ENCODE measurements at regions of chr3 and their contacts with region 1.

Region 1: DNA sequence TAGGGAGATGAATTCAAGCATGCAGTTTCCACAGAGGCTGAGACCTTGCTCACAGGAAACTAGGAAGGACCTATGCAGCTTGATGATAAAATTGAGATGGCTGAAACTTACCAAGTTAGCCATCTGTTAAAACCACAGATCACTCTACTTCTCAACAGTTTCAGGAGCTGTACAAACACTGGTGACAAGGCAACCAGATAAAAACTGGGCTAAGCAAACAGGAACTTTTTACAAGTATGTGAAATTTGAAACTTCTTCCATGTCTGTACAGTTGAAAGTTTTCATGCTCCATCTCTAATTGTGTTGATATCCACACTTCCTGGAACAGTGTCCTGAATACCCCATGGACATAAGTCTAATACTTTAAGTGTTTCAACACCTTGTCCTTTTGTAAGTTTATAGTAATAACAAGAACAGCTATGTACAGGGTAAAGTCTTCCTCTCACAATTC is 78.2 kb downstream of the FAIM start:
- DNase-seq: peak; percentile 89
- ATAC-seq: peak; percentile 93
- H3K4me3 ChIP-seq: no peak overlapping the region
- H3K27ac ChIP-seq: peak overlapping the region; percentile 24
- H3K4me1 ChIP-seq: peaks cover 40% of the 10 kb centered on the region
- H3K27me3 ChIP-seq: no peaks in the 10 kb centered on the region
- CTCF ChIP-seq: no peak
- EP300 ChIP-seq: peak in 1 of 2 experiments; percentile 74; a peak in 2 of 4 replicates
- POLR2A ChIP-seq: no peak
- RAD21 ChIP-seq: no peak

Region 2: GRCh38 chr3:138135146-138135832 is 551.5 kb before region 1 on chr3:
- CTCF ChIA-PET with region 1: no interaction called
- POLR2A ChIA-PET with region 1: no interaction called
- in situ Hi-C with region 1: no loop called
- intact Hi-C with region 1: no loop called
- DNase-seq: no peak
- ATAC-seq: no peak
- H3K4me3 ChIP-seq: no peak overlapping the region
- H3K27ac ChIP-seq: no peak overlapping the region
- H3K4me1 ChIP-seq: 0 out of 2 replicates have a peak, but pooled peaks cover 9% of the 10 kb centered on the region
- H3K27me3 ChIP-seq: no peaks in the 10 kb centered on the region; a peak in 1 of 5 replicates
- CTCF ChIP-seq: no peak
- EP300 ChIP-seq: no peak
- POLR2A ChIP-seq: no peak
- RAD21 ChIP-seq: no peak

Region 3: DNA sequence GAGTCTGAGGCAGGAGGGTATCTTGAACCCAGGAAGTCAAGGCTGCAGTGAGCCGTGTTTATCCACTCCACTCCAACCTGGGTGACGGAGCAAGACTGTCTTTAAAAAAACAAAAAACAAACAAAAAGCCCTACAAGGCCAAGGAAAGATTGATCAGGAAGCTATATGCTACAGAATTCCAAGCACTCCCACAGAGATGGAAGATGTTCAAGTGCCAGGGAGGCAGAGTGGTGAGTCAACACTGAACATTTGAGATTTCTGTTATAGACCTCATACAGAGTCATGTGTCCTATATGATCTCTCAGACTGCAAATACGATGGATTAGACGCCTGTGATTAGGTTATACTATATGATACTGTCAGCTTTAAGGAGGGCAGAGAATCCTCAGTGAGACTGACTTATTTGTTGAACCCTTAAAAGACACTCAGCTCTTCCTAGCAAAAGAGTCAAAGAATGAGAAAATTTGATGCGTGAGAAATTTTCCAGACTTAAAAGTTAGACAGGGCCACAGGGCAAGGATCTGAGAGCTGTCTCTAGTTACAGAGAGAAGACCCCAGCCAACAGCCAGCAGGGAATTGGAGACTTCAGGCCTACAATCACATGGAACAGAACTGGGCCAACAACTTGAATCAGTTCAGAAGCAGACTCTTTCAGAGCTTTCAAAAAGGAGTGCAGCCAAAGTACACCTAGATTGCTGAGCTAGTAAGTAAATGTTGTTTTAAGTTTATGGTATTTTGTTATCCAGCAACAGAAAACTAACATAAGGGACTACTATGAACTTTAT is 40.3 kb after region 1 on chr3:
- CTCF ChIA-PET with region 1: no interaction called
- POLR2A ChIA-PET with region 1: no interaction called
- in situ Hi-C with region 1: no loop called
- intact Hi-C with region 1: loop called (anchors 1 kb)
- DNase-seq: no peak
- ATAC-seq: no peak
- H3K4me3 ChIP-seq: no peak overlapping the region
- H3K27ac ChIP-seq: no peak overlapping the region
- H3K4me1 ChIP-seq: no peaks in the 10 kb centered on the region
- H3K27me3 ChIP-seq: no peaks in the 10 kb centered on the region
- CTCF ChIP-seq: no peak
- EP300 ChIP-seq: no peak
- POLR2A ChIP-seq: no peak
- RAD21 ChIP-seq: no peak

Region 4: DNA sequence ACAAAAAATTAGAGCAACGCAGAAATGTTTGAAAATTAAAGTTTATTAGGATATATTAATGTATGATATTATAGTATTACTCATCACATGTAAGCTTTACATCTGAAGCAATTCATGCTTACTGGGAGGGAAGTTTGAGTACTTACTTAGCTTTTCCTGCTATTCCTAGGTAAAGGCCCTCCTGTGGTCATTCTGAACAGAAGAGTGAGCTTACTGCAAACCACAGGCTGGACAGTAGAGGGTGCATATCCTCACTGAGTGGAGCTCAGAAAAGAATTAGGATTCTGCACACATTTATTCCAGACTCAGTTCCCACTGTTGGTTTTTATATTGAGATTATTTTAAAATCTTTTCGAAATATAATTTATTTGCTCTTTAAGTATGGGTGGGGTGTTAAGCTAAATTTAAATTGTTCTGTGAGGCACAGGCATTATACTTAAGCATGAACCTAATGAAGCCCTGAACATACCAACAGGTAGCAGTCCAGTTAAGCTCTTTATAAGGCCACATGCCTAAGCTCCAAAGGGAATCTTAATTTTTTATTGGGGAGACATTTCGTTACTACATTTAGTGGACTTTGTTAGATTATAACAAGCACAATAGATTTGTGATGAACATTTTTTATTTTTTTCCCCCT is 667.2 kb after region 1 on chr3:
- CTCF ChIA-PET with region 1: no interaction called
- POLR2A ChIA-PET with region 1: no interaction called
- in situ Hi-C with region 1: loop called (anchors 25 kb)
- intact Hi-C with region 1: no loop called
- DNase-seq: peak; percentile 62
- ATAC-seq: peak; percentile 97
- H3K4me3 ChIP-seq: no peak overlapping the region
- H3K27ac ChIP-seq: no peak overlapping the region
- H3K4me1 ChIP-seq: no peaks in the 10 kb centered on the region
- H3K27me3 ChIP-seq: no peaks in the 10 kb centered on the region
- CTCF ChIP-seq: peak; percentile 67
- EP300 ChIP-seq: no peak
- POLR2A ChIP-seq: no peak
- RAD21 ChIP-seq: no peak

Measured in HepG2 (cell line).